ENCODE measurements at regions of chr9 and their contacts with region 1.

Region 1: DNA sequence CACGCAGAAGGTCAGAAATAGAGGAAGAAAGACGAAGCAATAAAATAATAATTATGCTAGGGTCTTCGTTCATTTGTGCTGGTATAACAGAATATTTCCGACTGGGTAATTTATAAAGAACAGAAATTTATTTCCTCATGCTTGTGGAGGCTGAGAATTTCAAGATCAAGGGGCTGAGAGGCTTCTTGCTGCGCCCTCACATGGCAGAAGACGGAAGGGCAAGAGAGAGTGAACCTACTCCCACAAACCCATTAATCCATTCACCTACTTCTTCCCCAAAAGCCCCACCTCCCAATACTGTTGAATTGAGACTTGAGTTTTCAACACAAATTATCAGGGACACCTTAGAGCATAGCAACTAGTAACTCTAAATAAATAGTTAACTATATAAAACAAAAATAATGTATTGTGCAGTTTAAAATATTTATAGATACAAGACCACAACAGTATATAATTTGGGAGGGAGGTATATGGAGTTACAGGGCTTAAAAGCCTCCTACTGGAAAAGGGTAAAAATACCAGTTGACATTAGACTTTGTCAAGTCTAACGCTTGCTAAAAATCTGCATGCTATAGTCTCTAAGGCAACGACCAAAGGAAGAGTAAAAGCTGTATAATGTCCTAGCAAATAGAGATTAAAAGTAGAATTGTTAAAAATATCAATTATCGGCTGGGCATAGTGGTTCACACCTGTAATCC is 40.3 kb upstream of the NAA35 start:
- DNase-seq: peak; percentile 18
- H3K4me3 Mint-ChIP-seq: no peak overlapping the region
- H3K27ac Mint-ChIP-seq: no peak overlapping the region
- H3K4me1 Mint-ChIP-seq: peaks cover 4% of the 10 kb centered on the region
- H3K27me3 Mint-ChIP-seq: peaks cover 10% of the 10 kb centered on the region

Region 2: GRCh38 chr9:85569988-85570387 is 330.7 kb before region 1 on chr9:
- intact Hi-C with region 1: no loop called
- DNase-seq: no peak
- H3K4me3 Mint-ChIP-seq: no peak overlapping the region
- H3K27ac Mint-ChIP-seq: no peak overlapping the region
- H3K4me1 Mint-ChIP-seq: no peaks in the 10 kb centered on the region
- H3K27me3 Mint-ChIP-seq: no peaks in the 10 kb centered on the region

Region 3: DNA sequence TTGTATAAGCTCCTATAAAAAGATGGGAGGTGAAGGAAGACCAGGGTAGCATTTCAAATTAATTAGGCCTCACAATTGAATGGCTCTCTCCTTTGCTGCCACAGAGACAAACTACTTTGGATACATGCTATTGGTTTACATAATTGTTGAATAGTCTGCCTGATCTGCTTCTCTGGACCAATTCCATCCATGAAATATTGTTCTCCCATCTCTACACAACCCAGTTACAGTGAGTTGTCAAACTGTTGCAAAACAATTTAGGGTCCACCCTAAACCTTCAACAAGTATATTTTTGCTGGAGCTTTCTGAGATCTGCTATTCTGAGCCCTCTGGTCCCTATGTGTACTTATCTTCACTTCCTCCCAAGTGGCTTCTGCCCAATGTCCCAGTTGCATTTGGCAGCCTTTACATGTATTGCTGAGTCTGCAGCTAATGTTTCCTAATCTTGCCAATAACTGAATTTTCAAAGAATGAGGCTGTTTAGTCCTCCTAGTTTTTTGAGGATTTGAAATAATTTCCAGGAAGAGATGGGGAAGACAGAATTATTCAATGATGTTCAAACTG is 197.8 kb before region 1 on chr9:
- intact Hi-C with region 1: loop called (anchors 5 kb)
- DNase-seq: no peak
- H3K4me3 Mint-ChIP-seq: no peak overlapping the region
- H3K27ac Mint-ChIP-seq: no peak overlapping the region
- H3K4me1 Mint-ChIP-seq: peaks cover 11% of the 10 kb centered on the region
- H3K27me3 Mint-ChIP-seq: no peaks in the 10 kb centered on the region